Naive thymus-derived CD4-positive, alpha-beta T cell (primary cell): ENCODE measurements at regions of chr2 and their contacts with region 1.

Region 1: GRCh38 chr2:157327621-157328500 is 2.2 kb upstream of the ERMN start:
- DNase-seq: peak; percentile 60 to 89 (median 81)
- ATAC-seq: peak; percentile 97
- H3K4me3 ChIP-seq: no peak overlapping the region
- H3K4me3 Mint-ChIP-seq: peak overlapping the region; percentile 47 to 81 (median 60)
- H3K27ac ChIP-seq: peak overlapping the region; percentile 19
- H3K27ac Mint-ChIP-seq: peak overlapping the region; percentile 18 to 96 (median 85)
- H3K4me1 ChIP-seq: peaks cover 23 to 46% of the 10 kb centered on the region in 2 donors
- H3K4me1 Mint-ChIP-seq: peaks cover 36 to 65% (median 58%) of the 10 kb centered on the region in 7 donors
- H3K27me3 ChIP-seq: no peaks in the 10 kb centered on the region
- H3K27me3 Mint-ChIP-seq: no peaks in the 10 kb centered on the region

Region 2: GRCh38 chr2:157194097-157194688 is 133.7 kb before region 1 on chr2:
- CTCF ChIA-PET with region 1: no interaction called
- POLR2A ChIA-PET with region 1: no interaction called
- intact Hi-C with region 1: no loop called
- DNase-seq: peak in 5 of 9 donors; percentile 6 to 26 (median 15)
- ATAC-seq: peak; percentile 58
- H3K4me3 ChIP-seq: no peak overlapping the region
- H3K4me3 Mint-ChIP-seq: no peak overlapping the region
- H3K27ac ChIP-seq: no peak overlapping the region
- H3K27ac Mint-ChIP-seq: no peak overlapping the region
- H3K4me1 ChIP-seq: no peaks in the 10 kb centered on the region
- H3K4me1 Mint-ChIP-seq: peaks cover 0 to 6% (median 1%) of the 10 kb centered on the region in 7 donors
- H3K27me3 ChIP-seq: no peaks in the 10 kb centered on the region
- H3K27me3 Mint-ChIP-seq: peaks cover 0 to 10% (median 5%) of the 10 kb centered on the region in 5 donors

Region 3: DNA sequence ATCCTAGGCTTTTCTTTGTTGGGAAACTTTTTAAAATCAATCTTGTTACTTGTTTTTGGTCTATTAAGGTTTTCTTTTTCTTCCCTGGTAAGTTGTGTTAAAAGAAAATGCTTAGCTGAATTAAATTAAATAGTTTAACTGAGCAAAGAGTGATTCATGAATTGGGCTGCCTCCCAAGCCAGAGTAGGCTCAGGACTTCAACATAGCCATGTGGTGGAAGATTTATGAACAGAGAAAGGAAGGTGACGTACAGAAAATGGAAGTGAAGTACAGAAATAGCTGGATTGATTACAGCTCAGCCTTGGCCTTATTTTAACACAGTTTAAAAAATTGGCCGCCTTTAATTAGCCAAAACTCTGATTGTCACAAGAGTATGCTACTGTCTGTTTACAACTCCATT is 98.3 kb before region 1 on chr2:
- CTCF ChIA-PET with region 1: no interaction called
- POLR2A ChIA-PET with region 1: no interaction called
- intact Hi-C with region 1: no loop called
- DNase-seq: no peak
- ATAC-seq: no peak
- H3K4me3 ChIP-seq: no peak overlapping the region
- H3K4me3 Mint-ChIP-seq: no peak overlapping the region
- H3K27ac ChIP-seq: no peak overlapping the region
- H3K27ac Mint-ChIP-seq: no peak overlapping the region
- H3K4me1 ChIP-seq: no peaks in the 10 kb centered on the region
- H3K4me1 Mint-ChIP-seq: no peaks in the 10 kb centered on the region
- H3K27me3 ChIP-seq: no peaks in the 10 kb centered on the region
- H3K27me3 Mint-ChIP-seq: peaks cover 12 to 22% (median 18%) of the 10 kb centered on the region in 5 donors

Region 4: DNA sequence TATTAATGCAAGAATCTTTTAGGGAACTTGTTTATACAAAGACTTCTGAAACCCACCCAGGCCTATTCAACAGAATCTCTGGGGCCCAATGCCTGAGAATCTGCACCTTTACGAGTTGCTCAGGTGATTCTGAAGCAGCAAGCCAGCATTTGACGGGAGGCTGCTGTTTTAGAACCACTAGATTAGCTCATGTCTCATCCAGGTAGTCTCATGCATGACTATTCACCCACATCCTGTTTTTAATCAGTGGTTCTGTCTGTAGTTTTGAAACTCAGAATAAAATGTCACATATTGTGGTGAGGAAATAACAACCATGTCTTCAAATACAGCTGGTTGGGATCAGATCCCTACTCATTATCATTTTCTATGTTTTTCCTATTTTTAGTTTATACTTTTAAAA is 76.5 kb after region 1 on chr2:
- CTCF ChIA-PET with region 1: interaction called, 16 read pairs
- POLR2A ChIA-PET with region 1: interaction called, 112 read pairs
- intact Hi-C with region 1: loop called (anchors 1 to 2 kb)
- DNase-seq: peak in 8 of 9 donors; percentile 44 to 92 (median 88)
- ATAC-seq: peak; percentile 98
- H3K4me3 ChIP-seq: peak overlapping the region; percentile 7
- H3K4me3 Mint-ChIP-seq: peak overlapping the region; percentile 8 to 83 (median 74)
- H3K27ac ChIP-seq: peak overlapping the region; percentile 75
- H3K27ac Mint-ChIP-seq: peak overlapping the region; percentile 91 to 100 (median 99)
- H3K4me1 ChIP-seq: peaks cover 33 to 55% of the 10 kb centered on the region in 2 donors
- H3K4me1 Mint-ChIP-seq: peaks cover 31 to 82% (median 77%) of the 10 kb centered on the region in 7 donors
- H3K27me3 ChIP-seq: no peaks in the 10 kb centered on the region
- H3K27me3 Mint-ChIP-seq: no peaks in the 10 kb centered on the region

Region 5: DNA sequence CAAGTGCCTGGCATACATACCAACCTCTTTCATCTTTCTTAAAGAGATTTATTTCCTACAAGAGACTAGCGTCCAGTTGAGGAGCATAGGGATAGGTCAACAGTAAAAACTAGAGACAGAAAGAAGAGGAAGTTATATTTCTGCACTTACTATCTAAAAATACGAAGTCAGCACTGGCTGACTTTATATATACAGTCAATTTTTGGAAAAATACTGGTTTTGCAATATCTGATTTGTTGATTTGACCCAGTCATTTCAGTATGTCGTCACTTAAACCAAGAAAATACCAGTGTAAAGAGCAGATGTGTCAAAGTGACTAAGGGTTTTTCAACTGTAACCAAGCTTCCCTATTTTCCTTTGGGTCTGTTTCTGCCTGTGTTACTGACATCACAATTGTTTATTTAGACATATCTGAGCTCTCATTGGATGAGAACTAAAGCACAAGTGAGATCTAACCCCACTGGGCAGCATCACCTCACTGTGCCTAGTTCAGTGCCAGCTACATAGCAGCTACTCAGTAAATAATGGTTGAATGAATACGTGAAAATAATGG is 93.0 kb after region 1 on chr2:
- CTCF ChIA-PET with region 1: interaction called, 8 read pairs
- POLR2A ChIA-PET with region 1: interaction called, 554 read pairs
- intact Hi-C with region 1: loop called in 1 of 2 experiments (anchors 1 kb)
- DNase-seq: no peak
- ATAC-seq: peak; percentile 74
- H3K4me3 ChIP-seq: no peak overlapping the region
- H3K4me3 Mint-ChIP-seq: peak overlapping the region in 9 of 10 donors; percentile 30 to 75 (median 66)
- H3K27ac ChIP-seq: peak overlapping the region; percentile 86
- H3K27ac Mint-ChIP-seq: peak overlapping the region; percentile 90 to 98 (median 94)
- H3K4me1 ChIP-seq: peaks cover 59% of the 10 kb centered on the region in 2 donors
- H3K4me1 Mint-ChIP-seq: peaks cover 49 to 91% (median 80%) of the 10 kb centered on the region in 7 donors
- H3K27me3 ChIP-seq: no peaks in the 10 kb centered on the region
- H3K27me3 Mint-ChIP-seq: no peaks in the 10 kb centered on the region

Region 6: DNA sequence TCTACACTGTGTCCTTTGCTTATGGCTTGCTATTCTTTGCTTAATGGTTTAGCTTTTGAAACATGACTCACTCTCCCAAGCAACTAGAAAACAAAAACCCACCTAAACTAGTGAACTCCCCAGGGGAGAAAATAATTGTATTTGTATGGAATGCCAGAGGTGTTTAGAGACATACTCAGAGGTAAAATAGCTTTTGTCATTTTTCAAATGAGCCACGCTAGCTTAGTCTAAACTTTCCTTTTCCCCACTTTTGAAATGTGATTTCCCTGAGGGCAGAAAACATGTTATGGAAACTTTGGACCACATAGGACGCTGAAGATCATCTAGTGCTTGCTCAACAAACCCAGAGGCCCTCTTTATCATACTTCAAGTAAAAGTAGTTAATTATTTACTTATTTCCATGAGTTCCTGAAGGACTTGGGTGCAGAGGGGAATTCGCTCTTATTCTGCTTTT is 132.6 kb after region 1 on chr2:
- CTCF ChIA-PET with region 1: interaction called, 64 read pairs
- POLR2A ChIA-PET with region 1: interaction called, 8 read pairs
- intact Hi-C with region 1: no loop called
- DNase-seq: no peak
- ATAC-seq: no peak
- H3K4me3 ChIP-seq: no peak overlapping the region
- H3K4me3 Mint-ChIP-seq: peak overlapping the region in 8 of 10 donors; percentile 16 to 71 (median 48)
- H3K27ac ChIP-seq: no peak overlapping the region
- H3K27ac Mint-ChIP-seq: peak overlapping the region in 8 of 9 donors; percentile 7 to 98 (median 80)
- H3K4me1 ChIP-seq: peaks cover 15 to 59% of the 10 kb centered on the region in 2 donors
- H3K4me1 Mint-ChIP-seq: peaks cover 38 to 99% (median 94%) of the 10 kb centered on the region in 7 donors
- H3K27me3 ChIP-seq: no peaks in the 10 kb centered on the region
- H3K27me3 Mint-ChIP-seq: no peaks in the 10 kb centered on the region

Region 7: DNA sequence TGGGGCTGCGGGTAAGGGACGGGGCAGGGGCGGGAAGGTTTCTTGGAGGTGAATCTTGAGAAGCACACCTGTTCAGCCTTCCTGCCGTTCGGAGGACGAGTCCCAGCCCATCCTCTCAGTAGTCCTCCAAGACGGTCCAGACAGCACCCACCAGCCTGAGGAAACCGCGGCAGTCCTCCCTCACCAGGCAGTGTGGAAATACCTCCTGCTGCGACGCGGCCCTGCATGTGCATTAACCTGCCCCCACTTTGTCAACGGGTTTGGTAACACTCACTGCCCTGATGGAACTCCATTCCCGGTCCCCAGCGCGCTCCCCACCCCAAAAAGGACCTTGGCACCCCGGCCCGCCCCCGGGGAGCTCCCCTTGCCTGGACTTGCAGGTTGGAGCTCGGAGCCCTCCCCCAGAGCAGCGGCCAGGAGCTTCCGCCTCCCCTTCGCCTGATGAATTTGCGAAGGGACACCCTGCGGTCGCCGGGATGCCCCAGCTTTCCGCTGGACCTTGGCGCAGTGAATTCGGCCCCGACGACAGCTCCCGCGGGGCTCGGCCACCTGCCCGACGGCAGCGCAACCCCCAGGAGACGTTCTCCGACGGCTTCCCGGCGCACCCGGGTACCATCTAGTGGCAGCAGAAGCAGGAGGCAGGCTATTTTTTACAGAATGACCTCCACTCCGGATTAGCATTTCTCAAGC is 269.3 kb after region 1 on chr2:
- CTCF ChIA-PET with region 1: interaction called, 7 read pairs
- POLR2A ChIA-PET with region 1: no interaction called
- intact Hi-C with region 1: loop called (anchors 1 kb)
- DNase-seq: peak; percentile 32 to 60 (median 53)
- ATAC-seq: peak; percentile 80
- H3K4me3 ChIP-seq: no peak overlapping the region
- H3K4me3 Mint-ChIP-seq: peak overlapping the region; percentile 61 to 81 (median 72)
- H3K27ac ChIP-seq: no peak overlapping the region
- H3K27ac Mint-ChIP-seq: peak overlapping the region in 2 of 9 donors; percentile 21 to 65
- H3K4me1 ChIP-seq: no peaks in the 10 kb centered on the region
- H3K4me1 Mint-ChIP-seq: peaks cover 9 to 30% (median 20%) of the 10 kb centered on the region in 7 donors
- H3K27me3 ChIP-seq: no peaks in the 10 kb centered on the region
- H3K27me3 Mint-ChIP-seq: peaks cover 0 to 37% (median 0%) of the 10 kb centered on the region in 5 donors